ENCODE measurements at regions of chr11 and their contacts with region 1.

Region 1: GRCh38 chr11:118343981-118344515 is at the start of gene CD3G:
- DNase-seq: peak; percentile 80
- H3K4me3 Mint-ChIP-seq: peak within 1 kb of the TSS; percentile 89
- H3K27ac Mint-ChIP-seq: peak within 1 kb of the TSS; percentile 99
- H3K4me1 Mint-ChIP-seq: peaks cover 66% of the 10 kb centered on the region
- H3K27me3 Mint-ChIP-seq: no peaks in the 10 kb centered on the region
- total RNA-seq, gene CD3G: 223 to 225 TPM

Region 2: GRCh38 chr11:118251858-118252652 is 92.0 kb before region 1 on chr11 and contains the start of gene MPZL3:
- CTCF ChIA-PET with region 1: interaction called, 4 read pairs
- POLR2A ChIA-PET with region 1: interaction called, 15 read pairs
- DNase-seq: peak; percentile 82
- H3K4me3 Mint-ChIP-seq: peak within 1 kb of the TSS; percentile 93
- H3K27ac Mint-ChIP-seq: peak within 1 kb of the TSS; percentile 93
- H3K4me1 Mint-ChIP-seq: peaks cover 44% of the 10 kb centered on the region
- H3K27me3 Mint-ChIP-seq: no peaks in the 10 kb centered on the region
- total RNA-seq, gene MPZL3: 34.0 to 34.9 TPM

Region 3: GRCh38 chr11:118277306-118277705 is 66.7 kb before region 1 on chr11:
- CTCF ChIA-PET with region 1: no interaction called
- POLR2A ChIA-PET with region 1: no interaction called
- DNase-seq: no peak
- H3K4me3 Mint-ChIP-seq: no peak overlapping the region
- H3K27ac Mint-ChIP-seq: peak overlapping the region; percentile 34
- H3K4me1 Mint-ChIP-seq: peaks cover 44% of the 10 kb centered on the region
- H3K27me3 Mint-ChIP-seq: peaks cover 2% of the 10 kb centered on the region

Region 4: DNA sequence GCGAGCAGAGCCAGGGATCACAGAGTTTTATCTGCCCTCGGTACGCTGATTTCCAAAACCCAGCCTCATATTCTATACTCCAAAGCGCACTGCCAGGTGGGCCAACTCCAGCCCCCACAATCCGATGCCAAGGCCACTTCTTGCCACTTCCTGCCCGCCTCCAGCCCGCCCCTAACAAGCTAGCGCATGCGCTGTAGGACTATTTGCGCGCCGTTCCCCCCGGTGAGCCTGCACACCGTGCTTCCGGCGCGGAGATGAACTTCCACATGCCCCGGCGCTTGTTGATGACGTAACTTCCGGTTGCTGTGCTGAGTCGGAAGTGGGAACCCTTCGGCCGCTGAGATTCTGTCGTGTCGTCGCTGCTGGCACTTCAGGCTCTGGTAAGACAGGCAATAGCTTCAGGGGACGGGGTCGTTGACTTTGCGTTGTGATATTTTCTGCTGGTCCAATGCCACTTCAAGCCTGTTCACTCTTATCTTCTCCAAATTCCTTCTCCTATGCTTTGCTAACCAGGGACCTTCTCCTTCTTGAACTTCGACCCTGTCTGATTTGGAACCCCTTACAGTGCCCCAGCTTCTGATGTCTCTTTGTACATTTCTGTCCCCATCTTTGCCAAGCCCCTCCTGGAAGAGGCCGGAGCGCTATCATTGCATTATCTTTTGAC is 15.4 kb after region 1 on chr11 and contains the start of gene UBE4A:
- CTCF ChIA-PET with region 1: interaction called, 5 read pairs
- POLR2A ChIA-PET with region 1: interaction called, 28 read pairs
- DNase-seq: peak; percentile 98
- H3K4me3 Mint-ChIP-seq: peak within 1 kb of the TSS; percentile 92
- H3K27ac Mint-ChIP-seq: peak within 1 kb of the TSS; percentile 83
- H3K4me1 Mint-ChIP-seq: peaks cover 45% of the 10 kb centered on the region
- H3K27me3 Mint-ChIP-seq: no peaks in the 10 kb centered on the region
- total RNA-seq, gene UBE4A: 42.1 to 44.1 TPM

Region 5: GRCh38 chr11:118374729-118375128 is 30.7 kb after region 1 on chr11:
- CTCF ChIA-PET with region 1: no interaction called
- POLR2A ChIA-PET with region 1: no interaction called
- DNase-seq: no peak
- H3K4me3 Mint-ChIP-seq: no peak overlapping the region
- H3K27ac Mint-ChIP-seq: no peak overlapping the region
- H3K4me1 Mint-ChIP-seq: peaks cover 8% of the 10 kb centered on the region
- H3K27me3 Mint-ChIP-seq: no peaks in the 10 kb centered on the region

Measured in activated CD4-positive, alpha-beta memory T cell treated with anti-CD3 and anti-CD28 coated beads, Interleukin-2, amount 10 ng/mL, durations not matched to agents 7 days and 5 days (primary cell).